ENCODE measurements at regions of chr16 and their contacts with region 1.

Region 1: GRCh38 chr16:66058172-66058691 is 308.3 kb upstream of the CDH5 start:
- DNase-seq: no peak
- ATAC-seq: no peak
- H3K4me3 ChIP-seq: no peak overlapping the region
- H3K27ac ChIP-seq: no peak overlapping the region
- H3K4me1 ChIP-seq: no peaks in the 10 kb centered on the region
- H3K27me3 ChIP-seq: no peaks in the 10 kb centered on the region
- CTCF ChIP-seq: no peak

Region 2: GRCh38 chr16:66116163-66117002 is 58.2 kb after region 1 on chr16:
- intact Hi-C with region 1: loop called (anchors 10 kb)
- DNase-seq: no peak
- ATAC-seq: no peak
- H3K4me3 ChIP-seq: no peak overlapping the region
- H3K27ac ChIP-seq: no peak overlapping the region
- H3K4me1 ChIP-seq: no peaks in the 10 kb centered on the region
- H3K27me3 ChIP-seq: peaks cover 0 to 2% (median 0%) of the 10 kb centered on the region in 3 donors
- CTCF ChIP-seq: no peak

Measured in psoas muscle (tissue), 8 donors.